ENCODE measurements at regions of chr2 and their contacts with region 1.

Region 1: DNA sequence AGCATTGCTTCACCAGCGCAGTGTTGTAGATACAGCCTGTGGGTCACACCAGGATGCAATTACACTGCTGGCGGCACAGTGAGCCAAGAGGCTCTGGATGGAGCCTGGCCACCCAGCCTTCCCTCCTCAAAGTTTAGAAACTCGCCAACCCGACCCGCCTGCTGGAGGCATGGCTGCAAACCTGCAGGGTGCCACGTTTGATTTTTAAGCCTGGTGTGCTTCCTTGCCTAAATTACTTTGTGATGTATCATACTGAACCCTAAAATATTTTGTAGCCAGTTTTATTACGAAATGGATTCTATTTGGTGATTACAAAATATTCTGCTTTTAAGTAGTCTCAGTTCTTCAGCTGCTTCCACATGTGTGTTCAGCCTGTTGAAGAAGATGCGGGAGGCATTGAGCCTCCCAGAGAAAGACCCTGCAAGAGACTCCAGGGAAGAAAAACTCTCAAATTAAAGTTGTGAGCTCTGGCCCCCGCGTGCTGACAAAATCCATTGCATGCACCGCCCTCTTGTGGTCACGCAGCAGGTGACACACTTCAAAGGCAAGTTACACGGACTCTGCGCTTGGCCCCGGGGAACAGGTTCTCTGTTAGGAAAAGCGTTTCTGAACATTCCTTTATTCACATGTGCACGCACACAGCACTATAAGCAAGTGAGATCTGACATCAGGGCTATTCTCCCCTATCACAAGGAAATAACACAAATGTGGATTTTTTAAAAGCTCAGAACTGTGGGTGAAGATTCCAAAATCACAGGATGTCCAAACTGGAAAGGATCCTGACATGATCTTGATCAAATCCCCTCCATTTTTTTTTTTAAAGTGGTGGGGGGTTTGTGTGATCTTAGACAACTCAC is 63.0 kb upstream of the TWIST2 start:
- DNase-seq: peak; percentile 53
- ATAC-seq: no peak
- H3K4me3 ChIP-seq: no peak overlapping the region
- H3K4me3 Mint-ChIP-seq: no peak overlapping the region
- H3K27ac ChIP-seq: no peak overlapping the region
- H3K27ac Mint-ChIP-seq: no peak overlapping the region
- H3K4me1 ChIP-seq: no peaks in the 10 kb centered on the region
- H3K4me1 Mint-ChIP-seq: no peaks in the 10 kb centered on the region
- H3K27me3 ChIP-seq: no peaks in the 10 kb centered on the region
- H3K27me3 Mint-ChIP-seq: peaks cover 8% of the 10 kb centered on the region
- CTCF ChIP-seq: peak; percentile 84

Region 2: GRCh38 chr2:238256594-238257104 is 528.2 kb before region 1 on chr2:
- CTCF ChIA-PET with region 1: no interaction called
- POLR2A ChIA-PET with region 1: no interaction called
- intact Hi-C with region 1: loop called (anchors 5 kb)
- DNase-seq: peak; percentile 73
- ATAC-seq: peak; percentile 97
- H3K4me3 ChIP-seq: no peak overlapping the region
- H3K4me3 Mint-ChIP-seq: no peak overlapping the region
- H3K27ac ChIP-seq: no peak overlapping the region
- H3K27ac Mint-ChIP-seq: no peak overlapping the region
- H3K4me1 ChIP-seq: no peaks in the 10 kb centered on the region
- H3K4me1 Mint-ChIP-seq: no peaks in the 10 kb centered on the region
- H3K27me3 ChIP-seq: no peaks in the 10 kb centered on the region
- H3K27me3 Mint-ChIP-seq: no peaks in the 10 kb centered on the region
- CTCF ChIP-seq: peak; percentile 78

Region 3: GRCh38 chr2:238362626-238363025 is 422.3 kb before region 1 on chr2:
- CTCF ChIA-PET with region 1: interaction called, 15 read pairs
- POLR2A ChIA-PET with region 1: no interaction called
- intact Hi-C with region 1: loop called (anchors 5 kb)
- DNase-seq: no peak
- ATAC-seq: no peak
- H3K4me3 ChIP-seq: no peak overlapping the region
- H3K4me3 Mint-ChIP-seq: no peak overlapping the region
- H3K27ac ChIP-seq: no peak overlapping the region
- H3K27ac Mint-ChIP-seq: no peak overlapping the region
- H3K4me1 ChIP-seq: no peaks in the 10 kb centered on the region
- H3K4me1 Mint-ChIP-seq: peaks cover 4% of the 10 kb centered on the region
- H3K27me3 ChIP-seq: no peaks in the 10 kb centered on the region
- H3K27me3 Mint-ChIP-seq: no peaks in the 10 kb centered on the region
- CTCF ChIP-seq: no peak

Region 4: DNA sequence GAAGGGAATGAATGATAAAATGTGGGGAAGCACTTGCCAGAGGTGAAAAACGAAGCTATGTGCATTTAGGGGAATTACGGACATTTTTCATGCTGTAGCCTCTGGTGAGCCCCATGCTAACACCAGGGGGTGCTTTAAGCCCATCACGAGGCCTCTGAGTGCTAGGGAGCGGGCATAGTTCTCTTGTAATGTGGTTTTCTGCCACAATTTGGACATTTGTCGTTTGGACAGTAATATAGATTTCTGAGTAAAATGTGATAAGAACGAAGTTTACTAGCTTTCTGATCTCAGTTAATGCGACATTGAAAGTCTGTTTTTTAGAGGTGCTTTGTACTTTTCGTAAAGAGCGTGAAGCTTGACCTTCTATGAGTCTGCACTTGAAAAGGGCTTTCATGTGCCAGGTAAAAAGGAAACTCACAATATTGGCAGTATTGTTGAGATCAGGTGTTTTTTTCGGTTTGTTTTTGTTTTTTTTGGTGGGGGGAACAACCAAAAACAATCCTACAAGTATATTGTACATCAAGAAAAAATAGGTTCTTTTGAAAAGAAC is 414.0 kb before region 1 on chr2:
- CTCF ChIA-PET with region 1: interaction called, 34 read pairs
- POLR2A ChIA-PET with region 1: no interaction called
- intact Hi-C with region 1: no loop called
- DNase-seq: peak; percentile 46
- ATAC-seq: no peak
- H3K4me3 ChIP-seq: no peak overlapping the region
- H3K4me3 Mint-ChIP-seq: no peak overlapping the region
- H3K27ac ChIP-seq: no peak overlapping the region
- H3K27ac Mint-ChIP-seq: no peak overlapping the region
- H3K4me1 ChIP-seq: no peaks in the 10 kb centered on the region
- H3K4me1 Mint-ChIP-seq: no peaks in the 10 kb centered on the region
- H3K27me3 ChIP-seq: no peaks in the 10 kb centered on the region
- H3K27me3 Mint-ChIP-seq: no peaks in the 10 kb centered on the region
- CTCF ChIP-seq: peak; percentile 32